Dorsolateral prefrontal cortex (tissue), 120 donors: ENCODE measurements at regions of chr13 and their contacts with region 1.

Region 1: DNA sequence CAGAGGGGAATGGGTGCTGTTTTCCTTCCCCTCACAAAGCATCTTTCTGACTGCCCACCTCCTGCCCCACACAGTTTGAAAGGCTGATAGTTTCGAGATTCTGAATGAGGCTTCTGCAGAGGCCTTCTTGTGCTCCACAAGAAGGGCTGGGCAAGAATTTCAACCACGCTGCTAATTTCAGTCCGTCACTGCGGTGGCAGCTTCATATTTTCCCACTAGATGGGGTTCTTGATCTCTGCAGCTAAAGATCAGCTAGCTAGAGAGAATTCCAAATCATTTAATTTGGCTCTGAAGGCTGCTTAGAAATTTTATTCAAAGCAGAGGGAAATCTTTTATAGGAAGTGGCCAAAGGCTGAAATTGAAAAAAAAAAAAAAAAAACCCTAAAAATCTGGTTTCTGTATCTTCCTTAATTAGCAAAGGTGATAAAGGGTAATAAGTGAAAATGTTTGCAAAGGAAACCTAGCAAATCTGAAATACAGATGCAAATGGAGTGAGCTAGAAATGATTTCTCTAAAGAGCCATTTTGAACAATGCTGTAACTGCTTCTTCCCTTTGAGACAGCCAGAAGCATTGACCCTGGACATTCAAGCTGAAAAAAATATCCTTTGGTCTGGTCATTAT is 38.0 kb upstream of the C13orf42 start:
- DNase-seq: peak in 8 of 10 donors; percentile 49 to 70 (median 57)
- H3K4me3 ChIP-seq: no peak overlapping the region
- H3K27ac ChIP-seq: peak overlapping the region in 19 of 59 donors; percentile 1 to 74 (median 41)
- H3K27me3 ChIP-seq: no peaks in the 10 kb centered on the region
- CTCF ChIP-seq: peak; percentile 50 to 86 (median 75)

Region 2: GRCh38 chr13:51034906-51035305 is 114.2 kb before region 1 on chr13:
- intact Hi-C with region 1: no loop called
- DNase-seq: no peak
- H3K4me3 ChIP-seq: no peak overlapping the region
- H3K27ac ChIP-seq: peak overlapping the region in 1 of 59 donors; percentile 6
- H3K27me3 ChIP-seq: no peaks in the 10 kb centered on the region
- CTCF ChIP-seq: no peak

Region 3: DNA sequence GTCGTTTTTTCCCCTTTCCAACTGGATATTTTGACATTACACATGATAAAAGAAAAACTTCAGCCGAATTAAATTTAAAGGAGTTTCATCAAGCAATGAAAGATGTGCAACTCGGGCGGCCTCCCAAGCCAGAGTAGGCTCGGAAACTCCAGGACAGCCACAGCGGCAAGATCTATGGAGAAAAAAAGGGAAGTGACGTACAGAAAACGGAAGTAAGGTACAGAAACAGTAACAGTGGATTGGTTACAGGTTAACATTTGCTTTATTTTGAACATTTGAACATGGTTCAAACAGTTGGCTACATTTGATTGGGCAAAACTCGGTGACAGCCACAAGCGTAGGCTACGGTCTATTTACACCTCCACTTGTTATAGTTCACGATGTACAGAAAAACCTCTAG is 42.7 kb after region 1 on chr13:
- intact Hi-C with region 1: no loop called
- DNase-seq: no peak
- H3K4me3 ChIP-seq: no peak overlapping the region
- H3K27ac ChIP-seq: no peak overlapping the region
- H3K27me3 ChIP-seq: no peaks in the 10 kb centered on the region
- CTCF ChIP-seq: no peak

Region 4: DNA sequence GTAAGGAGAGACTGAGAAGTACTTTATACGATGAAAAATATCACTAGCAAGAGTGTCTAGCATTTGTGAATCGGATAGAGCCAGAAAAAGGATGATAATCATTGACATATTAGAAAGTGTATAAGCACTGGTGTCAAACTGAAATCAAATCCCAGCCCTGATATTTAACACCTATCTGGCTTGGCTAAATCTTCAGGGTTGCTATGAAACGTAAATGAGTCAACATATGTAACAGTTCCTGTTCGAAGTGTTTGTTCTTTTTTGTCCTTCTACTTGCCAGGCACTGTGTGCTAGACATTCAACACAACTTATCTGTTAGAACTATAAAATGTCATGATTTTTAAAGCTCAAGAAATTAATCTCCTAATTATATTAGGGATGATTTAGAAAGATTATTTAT is 231.2 kb after region 1 on chr13:
- intact Hi-C with region 1: no loop called
- DNase-seq: no peak
- H3K4me3 ChIP-seq: no peak overlapping the region
- H3K27ac ChIP-seq: no peak overlapping the region
- H3K27me3 ChIP-seq: no peaks in the 10 kb centered on the region
- CTCF ChIP-seq: no peak

Region 5: DNA sequence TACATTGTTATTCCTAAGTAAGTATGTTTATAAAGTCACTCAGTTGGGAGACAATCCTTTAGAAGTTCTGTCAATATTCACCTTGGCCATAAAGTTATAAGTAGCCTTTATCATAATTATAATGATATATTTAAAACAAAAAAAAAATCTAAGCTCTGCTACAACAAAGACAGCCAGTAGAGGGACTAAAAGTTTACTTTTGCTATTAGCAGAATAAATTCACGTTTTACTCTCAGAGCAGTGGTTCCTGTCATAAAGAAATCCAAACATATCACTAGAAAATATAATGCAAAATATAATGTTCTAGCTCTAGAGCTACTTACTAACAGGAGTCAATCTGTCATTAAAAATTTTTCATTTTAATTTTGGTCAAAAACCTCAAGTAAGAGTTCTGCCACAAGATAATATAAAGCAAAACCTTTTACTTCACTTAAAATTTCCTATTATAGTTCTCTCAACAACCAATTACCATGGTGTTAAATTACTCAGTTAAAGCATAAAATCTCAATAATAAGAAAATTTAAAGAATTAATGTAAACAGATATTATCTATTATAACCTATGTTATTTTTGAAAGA is 286.0 kb after region 1 on chr13:
- intact Hi-C with region 1: loop called in 1 of 2 experiments (anchors 10 kb)
- DNase-seq: no peak
- H3K4me3 ChIP-seq: no peak overlapping the region
- H3K27ac ChIP-seq: no peak overlapping the region
- H3K27me3 ChIP-seq: no peaks in the 10 kb centered on the region
- CTCF ChIP-seq: peak; percentile 20 to 72 (median 54)